ENCODE measurements at regions of chr4 and their contacts with region 1.

Region 1: DNA sequence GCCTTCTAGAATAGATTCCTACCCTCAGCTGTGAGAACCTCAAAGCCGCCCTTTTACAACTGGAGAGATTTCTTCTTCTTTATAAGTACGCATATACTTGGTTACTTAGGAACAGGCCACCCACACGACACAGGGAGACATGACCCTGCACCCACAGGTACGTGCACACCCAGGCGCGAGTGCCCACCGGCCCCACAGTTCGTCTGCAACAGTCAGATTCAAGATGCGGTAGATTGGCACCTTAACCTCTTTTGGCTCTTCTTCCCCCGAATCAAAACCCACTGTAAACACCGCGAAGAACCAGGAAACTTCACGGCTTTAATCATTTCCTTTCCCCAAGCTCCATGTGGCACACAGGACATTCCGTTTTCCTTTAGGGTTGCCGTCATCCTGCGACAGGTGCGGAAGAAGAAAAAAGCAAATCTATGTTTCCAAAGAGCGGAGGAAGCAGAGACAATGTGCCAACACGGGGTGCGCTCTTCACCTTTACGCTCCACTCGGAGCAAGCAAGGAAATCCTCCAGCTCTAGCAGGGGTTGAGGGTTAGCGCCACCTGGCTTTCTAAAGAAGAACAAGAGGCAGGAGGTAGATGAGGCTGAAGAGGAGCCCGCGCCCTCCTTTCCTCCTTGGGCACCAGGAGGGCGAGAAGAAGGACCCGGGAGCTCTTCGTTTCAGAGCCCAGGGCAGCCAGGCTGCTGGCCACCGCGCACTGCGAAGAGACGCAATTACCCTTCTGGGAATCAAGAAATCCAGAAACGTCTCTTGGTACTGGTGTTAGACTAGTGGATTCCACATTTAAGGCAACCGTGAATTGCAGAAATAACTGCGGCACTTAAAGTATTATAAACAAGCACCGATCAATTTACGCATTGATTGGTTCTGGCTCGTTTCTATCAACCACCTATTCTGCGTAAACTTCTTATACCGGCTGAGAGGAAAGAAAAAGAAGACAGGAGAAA is 35.7 kb downstream of the HAND2 start:
- DNase-seq: peak; percentile 74
- ATAC-seq: peak; percentile 93
- H3K4me3 ChIP-seq: peak overlapping the region; percentile 67
- H3K27ac ChIP-seq: no peak overlapping the region
- H3K4me1 ChIP-seq: peaks cover 14% of the 10 kb centered on the region
- H3K27me3 ChIP-seq: peaks cover 14% of the 10 kb centered on the region
- CTCF ChIP-seq: peak; percentile 82

Region 2: DNA sequence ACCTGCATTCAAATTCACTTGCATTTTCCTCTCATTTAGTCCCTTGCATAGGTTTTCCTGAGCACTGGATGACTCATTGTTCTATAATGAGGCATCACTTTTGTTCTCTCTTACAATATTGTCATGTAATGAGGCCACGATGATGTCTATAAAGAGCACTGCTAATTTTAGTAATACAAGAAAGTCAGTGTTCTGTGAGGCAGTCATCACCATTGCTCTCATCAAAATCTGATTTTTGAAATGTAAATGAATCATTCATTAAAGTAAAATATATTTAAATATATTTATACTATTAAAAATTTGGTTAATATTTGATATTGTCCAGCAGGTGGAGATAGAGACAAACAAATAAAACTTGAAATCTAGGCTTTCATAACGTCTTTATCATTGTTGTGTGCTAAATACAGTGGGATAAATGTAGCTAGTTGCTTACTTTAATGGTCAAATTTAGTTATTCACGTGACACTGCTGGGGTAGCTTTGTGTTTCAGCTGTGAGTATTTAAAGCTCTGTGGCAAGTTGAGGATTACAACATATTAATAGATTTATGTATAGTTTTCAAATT is 175.6 kb before region 1 on chr4:
- CTCF ChIA-PET with region 1: interaction called, 3 read pairs
- POLR2A ChIA-PET with region 1: no interaction called
- intact Hi-C with region 1: loop called (anchors 1 kb)
- DNase-seq: peak; percentile 56
- ATAC-seq: peak; percentile 67
- H3K4me3 ChIP-seq: no peak overlapping the region
- H3K27ac ChIP-seq: no peak overlapping the region
- H3K4me1 ChIP-seq: peaks cover 9% of the 10 kb centered on the region
- H3K27me3 ChIP-seq: no peaks in the 10 kb centered on the region
- CTCF ChIP-seq: 0 out of 2 replicates have a peak, but pooled peaks have one; percentile 18

Region 3: DNA sequence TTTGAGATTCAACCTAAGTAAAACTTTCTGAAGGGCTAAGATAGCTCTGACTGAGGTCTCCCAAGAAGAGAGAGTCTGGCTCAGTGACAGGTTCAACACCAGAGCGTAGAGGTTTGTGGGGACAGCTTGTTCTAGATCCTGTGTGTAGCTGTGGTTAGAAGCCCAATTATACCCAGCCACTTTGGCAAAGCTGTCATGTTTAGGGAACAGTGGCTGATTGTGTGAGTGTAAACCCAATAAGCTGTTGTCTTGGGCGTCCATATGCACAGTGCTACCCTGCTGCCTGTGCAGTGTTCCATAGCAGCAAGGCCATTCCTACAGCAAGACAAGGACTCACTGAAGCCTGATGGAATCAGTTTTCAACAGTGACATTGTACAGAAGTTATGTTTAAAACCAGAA is 84.2 kb before region 1 on chr4:
- CTCF ChIA-PET with region 1: no interaction called
- POLR2A ChIA-PET with region 1: no interaction called
- intact Hi-C with region 1: no loop called
- DNase-seq: no peak
- ATAC-seq: no peak
- H3K4me3 ChIP-seq: no peak overlapping the region
- H3K27ac ChIP-seq: no peak overlapping the region
- H3K4me1 ChIP-seq: peaks cover 8% of the 10 kb centered on the region
- H3K27me3 ChIP-seq: no peaks in the 10 kb centered on the region
- CTCF ChIP-seq: no peak